ENCODE measurements at regions of chr19 and their contacts with region 1.

Region 1: GRCh38 chr19:35545001-35545911 is at the start of gene TMEM147:
- DNase-seq: peak; percentile 97
- ATAC-seq: peak; percentile 98 to 99
- total RNA-seq, gene TMEM147: 78.1 to 87.5 TPM

Region 2: DNA sequence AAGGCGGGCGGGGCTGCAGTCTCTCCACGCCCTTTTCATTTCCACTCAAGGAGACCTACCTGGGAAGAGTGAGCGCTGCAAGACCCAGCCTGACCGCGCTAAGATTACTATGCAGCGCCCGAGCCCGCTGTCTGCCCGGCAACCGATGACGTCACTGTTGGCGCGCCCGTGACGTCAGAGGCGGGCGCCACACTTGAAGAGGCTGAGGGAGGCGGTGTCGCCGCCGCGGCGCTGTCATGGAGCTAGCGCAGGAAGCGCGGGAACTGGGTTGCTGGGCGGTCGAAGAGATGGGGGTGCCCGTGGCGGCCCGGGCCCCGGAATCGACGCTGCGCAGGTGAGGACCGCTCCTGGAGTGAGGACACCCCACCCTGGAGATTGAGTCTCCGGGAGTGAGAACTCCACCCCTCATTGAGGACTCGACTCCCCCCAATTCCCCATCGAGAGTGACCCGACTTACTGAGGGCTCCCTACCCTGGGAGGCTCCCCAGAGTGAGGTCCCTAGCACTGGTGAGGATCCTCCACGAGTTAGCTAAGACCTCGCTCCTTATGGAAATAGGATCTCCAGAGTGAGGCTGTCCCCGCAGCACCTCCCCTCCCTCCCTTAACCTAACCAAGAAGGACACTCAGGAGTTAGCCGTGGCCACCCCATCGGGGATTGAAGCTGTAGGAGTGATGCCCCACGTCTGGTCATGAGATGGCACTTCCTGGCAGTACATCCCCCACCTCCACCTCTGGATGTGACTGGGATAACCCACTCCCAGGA is 67.5 kb after region 1 on chr19 and contains the start of gene HAUS5:
- intact Hi-C with region 1: loop called in 1 of 2 experiments (anchors 5 kb)
- DNase-seq: peak; percentile 94
- ATAC-seq: peak; percentile 99
- total RNA-seq, gene HAUS5: 3.8 to 4.2 TPM

Region 3: GRCh38 chr19:35710784-35711723 is 165.8 kb after region 1 on chr19:
- intact Hi-C with region 1: loop called (anchors 5 kb)
- DNase-seq: no peak
- ATAC-seq: no peak

Region 4: GRCh38 chr19:35716801-35717666 is 171.8 kb after region 1 on chr19:
- intact Hi-C with region 1: loop called (anchors 5 kb)
- DNase-seq: peak; percentile 97
- ATAC-seq: peak; percentile 94 to 96

Measured in left cardiac atrium (tissue), 4 donors.